ENCODE measurements at regions of chr1 and their contacts with region 1.

Region 1: DNA sequence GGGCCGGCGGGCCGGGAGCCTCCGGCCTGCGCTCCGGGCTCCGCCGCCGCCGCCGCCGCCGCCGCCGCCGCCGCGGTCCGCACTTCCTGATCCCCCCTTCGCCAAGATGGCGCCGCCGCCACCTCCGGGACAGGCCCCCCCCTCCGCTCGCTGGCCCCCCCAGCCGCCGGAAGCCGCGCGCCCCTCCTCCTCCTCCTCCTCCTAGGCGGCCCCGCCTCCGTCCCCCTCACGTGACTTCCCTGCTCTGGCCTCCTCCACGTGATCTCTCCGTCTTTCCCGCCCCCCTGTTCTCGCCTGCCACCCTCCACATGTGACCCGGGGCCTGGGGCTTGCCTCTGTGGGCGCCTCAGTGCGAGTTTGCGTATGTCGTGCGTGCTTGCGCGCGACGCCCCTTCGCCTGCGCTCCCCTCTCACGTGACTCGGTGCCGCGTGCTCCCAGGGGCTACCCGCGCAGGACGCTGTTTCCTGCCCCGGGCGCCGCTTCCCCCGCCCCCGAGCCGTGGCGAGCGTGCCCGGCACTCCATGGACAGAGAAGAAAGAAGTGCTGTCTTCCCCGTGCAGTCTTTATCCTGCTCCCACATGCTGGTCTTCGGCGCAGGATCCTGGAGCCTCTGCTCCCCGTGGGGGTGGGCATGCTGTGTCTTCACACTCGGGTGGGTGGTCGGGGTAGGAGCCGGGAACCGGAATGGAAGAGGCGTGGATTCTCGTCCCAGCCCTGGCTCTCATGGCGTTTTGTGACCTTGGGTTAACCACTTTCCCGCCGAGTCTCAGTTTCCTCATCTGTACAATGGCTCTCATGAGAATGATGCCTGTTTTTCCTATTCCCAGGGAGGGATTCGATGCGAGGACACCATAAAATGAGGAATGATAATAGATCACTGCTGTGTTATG is at the start of gene UBE2Q1:
- H3K4me3 ChIP-seq: peak within 1 kb of the TSS; percentile 81
- H3K27ac ChIP-seq: peak within 1 kb of the TSS; percentile 73
- H3K4me1 ChIP-seq: no peaks in the 10 kb centered on the region
- CTCF ChIP-seq: no peak; the same call in 1 of the 2 replicates

Region 2: GRCh38 chr1:154295408-154296235 is 263.2 kb before region 1 on chr1:
- CTCF ChIA-PET with region 1: no interaction called
- POLR2A ChIA-PET with region 1: no interaction called
- H3K4me3 ChIP-seq: no peak overlapping the region
- H3K27ac ChIP-seq: no peak overlapping the region
- H3K4me1 ChIP-seq: no peaks in the 10 kb centered on the region
- CTCF ChIP-seq: no peak

Region 3: GRCh38 chr1:154408174-154408777 is 150.5 kb before region 1 on chr1:
- CTCF ChIA-PET with region 1: no interaction called
- POLR2A ChIA-PET with region 1: no interaction called
- H3K4me3 ChIP-seq: no peak overlapping the region
- H3K27ac ChIP-seq: no peak overlapping the region
- H3K4me1 ChIP-seq: peaks cover 2% of the 10 kb centered on the region; the same call in 1 of the 2 replicates
- CTCF ChIP-seq: no peak

Region 4: GRCh38 chr1:154574716-154575115 is 15.9 kb after region 1 on chr1:
- CTCF ChIA-PET with region 1: interaction called, 18 read pairs
- POLR2A ChIA-PET with region 1: no interaction called
- H3K4me3 ChIP-seq: no peak overlapping the region
- H3K27ac ChIP-seq: no peak overlapping the region
- H3K4me1 ChIP-seq: peaks cover 6% of the 10 kb centered on the region; the same call in 1 of the 2 replicates
- CTCF ChIP-seq: no peak

Region 5: DNA sequence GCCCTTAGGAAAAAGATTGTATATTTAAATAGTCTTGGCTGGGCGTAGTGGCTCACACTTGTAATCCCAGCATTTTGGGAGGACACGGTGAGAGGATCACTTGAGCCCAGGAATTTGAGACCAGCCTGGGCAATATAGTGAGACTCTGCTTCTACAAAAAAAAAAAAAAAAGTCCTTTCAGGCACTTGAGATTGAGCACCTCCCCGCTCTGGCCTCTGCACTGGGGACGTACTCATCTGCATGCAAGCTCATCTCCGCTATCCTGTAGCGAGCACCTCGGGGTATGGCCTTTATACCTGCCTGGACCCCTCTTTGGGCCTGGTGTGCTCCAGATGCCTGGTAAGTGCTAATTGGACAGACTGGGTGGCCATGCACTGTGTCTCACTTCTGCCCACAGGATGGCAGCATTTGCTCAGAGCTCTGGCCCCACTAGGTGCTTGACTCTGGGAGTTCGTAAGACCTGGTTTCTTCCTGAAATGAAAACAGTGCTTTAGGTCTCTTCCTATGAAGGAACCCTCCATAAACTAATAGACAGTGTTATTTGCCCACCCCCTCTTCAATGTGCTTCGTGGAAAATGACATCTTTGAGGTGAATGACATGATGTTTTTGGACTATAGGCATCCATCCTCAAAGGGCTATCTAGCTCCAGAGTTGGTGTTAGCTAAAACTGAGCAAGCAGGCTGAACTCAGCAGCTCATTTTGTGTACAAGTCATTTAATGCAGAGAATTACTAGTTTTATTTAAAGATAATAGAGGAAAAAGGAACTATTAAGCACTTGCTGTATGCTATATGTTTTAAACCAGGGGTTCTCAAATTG is 110.9 kb after region 1 on chr1:
- CTCF ChIA-PET with region 1: interaction called, 21 read pairs
- POLR2A ChIA-PET with region 1: no interaction called
- H3K4me3 ChIP-seq: no peak overlapping the region
- H3K27ac ChIP-seq: no peak overlapping the region
- H3K4me1 ChIP-seq: no peaks in the 10 kb centered on the region
- CTCF ChIP-seq: peak; percentile 80

Region 6: DNA sequence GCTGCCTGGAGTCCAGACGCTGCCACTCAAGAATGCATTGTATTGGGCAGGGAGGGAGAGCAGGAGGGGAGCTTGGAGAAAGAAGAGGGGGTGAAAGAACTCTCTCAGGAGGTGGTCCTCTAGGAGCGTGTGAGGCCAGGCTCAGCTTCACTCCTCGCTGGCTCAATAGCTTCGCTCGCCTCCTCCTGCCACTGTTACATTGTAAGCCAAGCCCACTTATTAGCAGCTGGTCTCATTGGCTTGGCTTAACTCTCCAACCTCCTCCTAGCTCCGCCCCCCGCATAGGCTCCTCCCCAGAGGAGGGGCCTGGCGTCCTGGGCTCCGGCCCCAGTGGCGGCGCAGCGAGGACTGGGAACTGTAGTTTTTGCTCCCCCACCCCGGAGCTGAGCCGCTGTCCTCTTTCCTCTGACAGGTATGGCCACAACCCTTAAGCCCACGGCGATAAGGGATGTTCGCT is 311.3 kb after region 1 on chr1 and contains the start of gene KCNN3:
- CTCF ChIA-PET with region 1: interaction called, 35 read pairs
- POLR2A ChIA-PET with region 1: no interaction called
- H3K4me3 ChIP-seq: no peak within 1 kb of the TSS; the same call in 1 of the 2 replicates
- H3K27ac ChIP-seq: no peak within 1 kb of the TSS
- H3K4me1 ChIP-seq: peaks cover 5% of the 10 kb centered on the region
- CTCF ChIP-seq: no peak

Measured in HEK293 (cell line).